CD8-positive, alpha-beta memory T cell (primary cell): ENCODE measurements at regions of chr1 and their contacts with region 1.

Region 1: GRCh38 chr1:110106013-110106941 is 6.0 kb upstream of the UBL4B start:
- DNase-seq: peak; percentile 13 to 61 (median 32)
- H3K4me3 ChIP-seq: no peak overlapping the region
- H3K4me3 Mint-ChIP-seq: no peak overlapping the region
- H3K27ac ChIP-seq: no peak overlapping the region
- H3K27ac Mint-ChIP-seq: peak overlapping the region in 1 of 8 donors; percentile 57
- H3K4me1 ChIP-seq: no peaks in the 10 kb centered on the region
- H3K4me1 Mint-ChIP-seq: no peaks in the 10 kb centered on the region
- H3K27me3 ChIP-seq: no peaks in the 10 kb centered on the region
- H3K27me3 Mint-ChIP-seq: peaks cover 10 to 20% of the 10 kb centered on the region in 2 donors

Region 2: GRCh38 chr1:110118636-110119615 is 12.6 kb after region 1 on chr1:
- CTCF ChIA-PET with region 1: interaction called, 16 read pairs
- POLR2A ChIA-PET with region 1: no interaction called
- DNase-seq: no peak
- H3K4me3 ChIP-seq: no peak overlapping the region
- H3K4me3 Mint-ChIP-seq: peak overlapping the region in 1 of 7 donors; percentile 15
- H3K27ac ChIP-seq: no peak overlapping the region
- H3K27ac Mint-ChIP-seq: no peak overlapping the region
- H3K4me1 ChIP-seq: no peaks in the 10 kb centered on the region
- H3K4me1 Mint-ChIP-seq: peaks cover 0 to 3% (median 0%) of the 10 kb centered on the region in 3 donors
- H3K27me3 ChIP-seq: no peaks in the 10 kb centered on the region
- H3K27me3 Mint-ChIP-seq: peaks cover 6 to 52% of the 10 kb centered on the region in 2 donors